ENCODE measurements at regions of chr2 and their contacts with region 1.

Region 1: DNA sequence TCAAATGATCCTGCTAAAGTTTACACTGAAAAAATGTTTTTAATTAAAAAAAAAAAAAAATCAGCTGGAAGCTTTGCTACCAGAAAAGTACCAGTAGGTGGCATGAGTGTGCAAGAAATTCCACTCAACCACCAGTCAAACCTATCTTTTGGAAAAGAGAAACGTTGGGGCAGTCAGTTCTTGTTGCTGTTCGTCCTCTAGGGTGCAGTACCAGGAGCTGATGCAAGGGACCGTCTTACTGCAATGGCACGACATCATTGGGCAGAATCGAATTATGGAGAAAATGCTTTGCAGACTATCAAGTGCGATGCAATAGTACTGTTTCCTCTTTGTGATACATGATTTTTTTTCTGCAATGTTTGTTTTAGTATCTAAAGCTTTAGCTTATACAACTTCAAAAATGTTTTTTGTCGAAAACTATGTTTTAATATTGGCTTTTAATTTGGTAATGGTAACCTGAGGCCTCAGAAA is 18.3 kb downstream of the YPEL5 start:
- DNase-seq: peak; percentile 96
- H3K4me3 ChIP-seq: no peak overlapping the region
- H3K27ac ChIP-seq: peak overlapping the region; percentile 13
- H3K4me1 ChIP-seq: peaks cover 25% of the 10 kb centered on the region
- H3K27me3 ChIP-seq: no peaks in the 10 kb centered on the region
- CTCF ChIP-seq: peak; percentile 97

Region 2: GRCh38 chr2:30147715-30148610 is 17.1 kb before region 1 on chr2:
- CTCF ChIA-PET with region 1: interaction called, 16 read pairs
- POLR2A ChIA-PET with region 1: no interaction called
- intact Hi-C with region 1: no loop called
- DNase-seq: peak; percentile 89
- H3K4me3 ChIP-seq: peak overlapping the region; percentile 86
- H3K27ac ChIP-seq: peak overlapping the region; percentile 92
- H3K4me1 ChIP-seq: peaks cover 28% of the 10 kb centered on the region
- H3K27me3 ChIP-seq: no peaks in the 10 kb centered on the region
- CTCF ChIP-seq: peak; percentile 45; the same call in 1 of the 2 replicates

Region 3: DNA sequence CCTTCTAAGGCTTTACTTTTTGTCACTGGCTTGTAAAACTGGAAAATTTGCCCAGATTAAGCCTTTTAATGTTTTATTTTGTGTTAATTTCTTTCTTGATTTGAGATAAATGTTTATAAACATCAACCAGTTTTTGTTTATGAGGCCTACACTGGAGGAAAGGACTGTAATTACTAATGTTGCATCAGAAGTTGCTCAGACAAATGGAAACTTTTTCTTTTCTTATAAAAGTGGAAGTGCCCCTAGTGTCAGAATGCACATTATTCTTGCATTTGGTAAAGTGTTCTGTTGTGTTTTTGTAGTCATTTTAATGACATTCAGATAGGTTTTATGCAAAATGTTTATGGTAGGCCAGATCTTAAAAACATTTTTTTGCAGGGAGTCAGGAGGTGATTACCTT is 307.2 kb after region 1 on chr2:
- CTCF ChIA-PET with region 1: no interaction called
- POLR2A ChIA-PET with region 1: no interaction called
- intact Hi-C with region 1: no loop called
- DNase-seq: no peak
- H3K4me3 ChIP-seq: no peak overlapping the region
- H3K27ac ChIP-seq: peak overlapping the region; percentile 40
- H3K4me1 ChIP-seq: peaks cover 11% of the 10 kb centered on the region
- H3K27me3 ChIP-seq: no peaks in the 10 kb centered on the region
- CTCF ChIP-seq: no peak